Activated CD4-positive, alpha-beta T cell treated with anti-CD3 and anti-CD28 coated beads for 36 hours (primary cell): ENCODE measurements at regions of chr2 and their contacts with region 1.

Region 1: DNA sequence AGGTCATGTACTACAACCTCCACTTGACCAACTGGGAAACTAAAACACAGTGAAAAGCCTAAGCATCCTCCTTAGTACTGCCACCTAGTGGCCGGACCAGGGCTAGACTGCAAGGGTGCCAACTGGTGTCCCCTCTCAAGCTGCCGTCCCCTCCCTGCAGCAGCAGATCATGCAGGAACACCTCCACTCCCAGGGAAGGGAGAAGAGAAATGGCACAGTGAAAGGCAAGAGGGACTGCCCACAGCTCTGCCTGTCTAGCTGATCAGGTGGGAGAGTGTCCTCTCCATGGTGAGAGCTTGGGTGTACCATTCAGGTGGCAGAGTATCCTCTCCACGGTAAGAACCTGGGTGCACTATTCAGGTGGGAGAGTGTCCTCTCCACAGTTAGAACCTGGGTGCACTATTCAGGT is 78.1 kb downstream of the AAK1 start:
- DNase-seq: peak; percentile 83
- ATAC-seq: peak; percentile 78
- H3K4me3 Mint-ChIP-seq: no peak overlapping the region
- H3K27ac Mint-ChIP-seq: peak overlapping the region; percentile 52
- H3K4me1 Mint-ChIP-seq: peaks cover 93% of the 10 kb centered on the region
- H3K27me3 Mint-ChIP-seq: no peaks in the 10 kb centered on the region

Region 2: GRCh38 chr2:69375494-69376353 is 189.7 kb before region 1 on chr2:
- CTCF ChIA-PET with region 1: interaction called, 3 read pairs
- POLR2A ChIA-PET with region 1: no interaction called
- intact Hi-C with region 1: loop called in 1 of 2 experiments (anchors 5 kb)
- DNase-seq: no peak
- ATAC-seq: peak; percentile 85
- H3K4me3 Mint-ChIP-seq: no peak overlapping the region
- H3K27ac Mint-ChIP-seq: peak overlapping the region; percentile 1
- H3K4me1 Mint-ChIP-seq: peaks cover 15% of the 10 kb centered on the region
- H3K27me3 Mint-ChIP-seq: no peaks in the 10 kb centered on the region

Region 3: DNA sequence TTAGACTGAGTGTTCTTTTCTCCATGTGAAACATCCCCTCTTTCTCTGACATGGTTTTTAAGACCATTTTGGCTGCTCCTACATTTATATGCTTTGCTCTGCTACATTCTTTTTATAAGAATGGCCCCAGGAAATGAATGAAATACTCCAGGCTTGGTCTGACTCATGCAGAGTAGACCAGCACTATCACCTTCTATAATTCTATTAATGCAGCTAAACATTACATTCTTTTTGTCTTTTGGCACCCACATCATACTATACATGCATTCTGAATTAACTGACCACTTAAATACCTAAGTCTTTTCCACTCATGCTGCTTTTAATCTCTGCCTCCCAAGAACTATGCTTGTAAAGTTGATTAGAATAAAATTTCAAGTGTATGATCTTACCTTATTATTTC is 16.0 kb before region 1 on chr2:
- CTCF ChIA-PET with region 1: interaction called, 41 read pairs
- POLR2A ChIA-PET with region 1: interaction called, 3 read pairs
- intact Hi-C with region 1: no loop called
- DNase-seq: no peak
- ATAC-seq: no peak
- H3K4me3 Mint-ChIP-seq: no peak overlapping the region
- H3K27ac Mint-ChIP-seq: peak overlapping the region; percentile 21
- H3K4me1 Mint-ChIP-seq: peaks cover 51% of the 10 kb centered on the region
- H3K27me3 Mint-ChIP-seq: no peaks in the 10 kb centered on the region

Region 4: GRCh38 chr2:69589973-69590652 is 24.7 kb after region 1 on chr2:
- CTCF ChIA-PET with region 1: interaction called, 189 read pairs
- POLR2A ChIA-PET with region 1: interaction called, 3 read pairs
- intact Hi-C with region 1: no loop called
- DNase-seq: no peak
- ATAC-seq: peak; percentile 50
- H3K4me3 Mint-ChIP-seq: no peak overlapping the region
- H3K27ac Mint-ChIP-seq: peak overlapping the region; percentile 76
- H3K4me1 Mint-ChIP-seq: peaks cover 71% of the 10 kb centered on the region
- H3K27me3 Mint-ChIP-seq: no peaks in the 10 kb centered on the region

Region 5: GRCh38 chr2:69616756-69617155 is 51.3 kb after region 1 on chr2:
- CTCF ChIA-PET with region 1: interaction called, 11 read pairs
- POLR2A ChIA-PET with region 1: no interaction called
- intact Hi-C with region 1: no loop called
- DNase-seq: peak; percentile 65
- ATAC-seq: peak; percentile 30
- H3K4me3 Mint-ChIP-seq: peak overlapping the region; percentile 11
- H3K27ac Mint-ChIP-seq: peak overlapping the region; percentile 73
- H3K4me1 Mint-ChIP-seq: peaks cover 41% of the 10 kb centered on the region
- H3K27me3 Mint-ChIP-seq: no peaks in the 10 kb centered on the region

Region 6: DNA sequence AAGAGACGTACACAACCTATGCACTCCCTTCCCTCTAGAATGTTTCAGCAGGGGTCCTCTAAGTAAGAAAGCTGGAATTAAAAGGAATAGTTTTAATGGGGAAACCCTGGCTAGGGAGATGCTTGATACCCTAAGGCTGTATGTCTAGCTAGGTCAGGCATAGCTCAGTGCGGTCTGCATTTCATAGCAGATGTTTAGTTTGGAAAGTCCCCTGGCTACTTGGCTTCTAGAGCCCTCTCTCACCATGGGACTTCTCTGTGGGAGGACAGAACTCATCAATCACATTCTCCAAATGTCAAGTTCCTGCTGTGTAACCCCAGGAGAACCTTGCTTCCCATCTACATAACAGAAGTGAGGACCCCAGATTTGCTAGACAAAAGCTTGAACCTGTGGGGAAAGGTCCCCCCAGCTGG is 152.4 kb after region 1 on chr2:
- CTCF ChIA-PET with region 1: interaction called, 25 read pairs
- POLR2A ChIA-PET with region 1: no interaction called
- intact Hi-C with region 1: no loop called
- DNase-seq: no peak
- ATAC-seq: no peak
- H3K4me3 Mint-ChIP-seq: no peak overlapping the region
- H3K27ac Mint-ChIP-seq: no peak overlapping the region
- H3K4me1 Mint-ChIP-seq: peaks cover 15% of the 10 kb centered on the region
- H3K27me3 Mint-ChIP-seq: no peaks in the 10 kb centered on the region